ENCODE measurements at regions of chr15 and their contacts with region 1.

Region 1: GRCh38 chr15:68672781-68673205 is 94.0 kb downstream of the CORO2B start:
- DNase-seq: no peak
- ATAC-seq: no peak
- H3K4me3 ChIP-seq: no peak overlapping the region
- H3K4me1 ChIP-seq: no peaks in the 10 kb centered on the region
- CTCF ChIP-seq: no peak

Region 2: DNA sequence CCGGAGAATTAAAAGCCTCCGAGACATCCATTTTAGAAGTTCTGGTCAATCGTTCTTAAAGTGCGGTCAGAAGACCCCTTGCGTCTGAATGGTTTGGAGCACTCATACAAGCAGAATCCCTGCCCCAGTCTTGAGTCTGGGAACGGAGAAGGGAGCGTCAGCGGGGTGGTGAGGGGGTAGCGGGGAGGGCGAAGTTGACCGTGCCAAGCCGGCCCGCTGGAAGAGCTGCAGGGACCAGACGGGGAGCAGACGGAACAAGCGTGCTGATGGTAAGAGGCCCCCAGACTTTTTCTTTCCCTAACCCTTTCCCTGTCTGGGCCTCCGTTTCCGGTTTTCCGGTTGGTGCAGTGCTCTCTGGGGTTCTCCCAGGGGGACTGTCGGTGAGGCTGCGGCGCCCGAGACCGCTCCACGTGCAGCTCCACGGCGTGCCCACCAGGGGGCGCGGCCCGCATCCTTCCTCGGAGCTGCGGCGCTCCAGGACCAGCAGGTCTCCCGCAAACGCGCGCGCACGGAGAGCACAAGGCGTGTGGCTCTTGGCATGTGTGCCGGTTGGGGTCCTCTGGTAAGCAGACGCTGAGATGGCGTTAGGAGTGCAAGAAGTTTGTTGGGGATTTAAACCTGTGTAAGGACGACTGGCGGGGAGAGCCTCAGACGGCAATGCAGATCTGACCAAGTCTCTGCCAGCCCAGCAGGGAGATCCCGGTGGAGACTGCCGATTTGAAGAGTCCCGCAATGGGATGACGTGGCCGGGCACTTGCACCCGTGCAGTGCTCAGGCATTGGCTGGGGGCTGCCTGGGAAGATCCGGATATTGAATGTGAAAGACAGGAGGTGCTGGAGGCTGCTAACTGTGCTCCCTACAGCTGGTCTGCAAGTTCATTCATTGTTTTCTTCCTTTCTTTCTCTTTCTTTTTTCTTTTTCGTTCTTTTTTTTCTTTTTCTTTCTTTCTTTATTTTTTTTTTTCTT is 113.2 kb before region 1 on chr15:
- intact Hi-C with region 1: loop called (anchors 5 to 10 kb)
- DNase-seq: peak; percentile 75 to 80 (median 77)
- ATAC-seq: peak; percentile 95
- H3K4me3 ChIP-seq: no peak overlapping the region
- H3K4me1 ChIP-seq: no peaks in the 10 kb centered on the region
- CTCF ChIP-seq: peak; percentile 90

Region 3: DNA sequence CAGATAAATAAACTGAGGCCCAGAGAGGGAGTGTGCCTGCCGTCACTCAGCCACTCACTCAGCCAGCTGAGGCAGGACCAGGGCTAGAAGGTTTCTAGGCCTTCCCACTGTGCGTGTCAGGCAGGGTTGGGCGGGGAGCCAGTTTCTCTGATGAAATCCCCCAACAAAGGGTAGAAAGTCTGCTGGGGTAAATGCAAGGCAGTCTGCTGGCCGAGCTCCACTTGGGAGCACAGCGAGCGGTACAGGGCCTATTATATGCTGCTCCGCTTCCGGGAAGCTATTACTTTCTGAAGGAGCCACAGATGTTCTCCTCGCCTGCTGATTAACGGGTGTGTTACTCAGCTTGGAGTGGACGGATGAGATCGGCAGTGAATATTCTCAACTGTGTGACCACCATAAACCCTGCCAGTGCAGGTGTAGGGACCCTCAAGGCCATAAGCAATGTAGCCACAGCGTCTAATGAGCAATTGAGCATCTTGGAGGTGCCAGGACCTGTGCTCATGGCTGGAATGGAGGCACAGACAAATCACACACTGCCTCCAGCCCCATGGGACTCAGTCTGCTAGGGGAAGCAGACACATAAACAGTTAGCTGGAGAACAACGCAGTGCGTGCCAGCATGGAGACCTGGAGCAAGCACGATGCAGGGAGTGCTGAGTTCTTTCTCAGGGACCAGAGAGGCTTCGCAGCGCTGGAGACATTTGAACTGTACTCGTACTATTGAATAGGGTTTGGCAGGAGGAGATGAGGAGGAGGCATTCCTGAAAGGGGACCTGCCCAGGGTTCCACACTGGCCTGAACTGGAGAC is 51.9 kb before region 1 on chr15:
- intact Hi-C with region 1: no loop called
- DNase-seq: peak; percentile 58 to 79 (median 66)
- ATAC-seq: peak; percentile 67
- H3K4me3 ChIP-seq: no peak overlapping the region
- H3K4me1 ChIP-seq: no peaks in the 10 kb centered on the region
- CTCF ChIP-seq: no peak

Region 4: GRCh38 chr15:68795298-68795848 is 122.6 kb after region 1 on chr15:
- intact Hi-C with region 1: no loop called
- DNase-seq: peak; percentile 91 to 93 (median 91)
- ATAC-seq: peak; percentile 91
- H3K4me3 ChIP-seq: no peak overlapping the region
- H3K4me1 ChIP-seq: peaks cover 65% of the 10 kb centered on the region
- CTCF ChIP-seq: no peak

Region 5: DNA sequence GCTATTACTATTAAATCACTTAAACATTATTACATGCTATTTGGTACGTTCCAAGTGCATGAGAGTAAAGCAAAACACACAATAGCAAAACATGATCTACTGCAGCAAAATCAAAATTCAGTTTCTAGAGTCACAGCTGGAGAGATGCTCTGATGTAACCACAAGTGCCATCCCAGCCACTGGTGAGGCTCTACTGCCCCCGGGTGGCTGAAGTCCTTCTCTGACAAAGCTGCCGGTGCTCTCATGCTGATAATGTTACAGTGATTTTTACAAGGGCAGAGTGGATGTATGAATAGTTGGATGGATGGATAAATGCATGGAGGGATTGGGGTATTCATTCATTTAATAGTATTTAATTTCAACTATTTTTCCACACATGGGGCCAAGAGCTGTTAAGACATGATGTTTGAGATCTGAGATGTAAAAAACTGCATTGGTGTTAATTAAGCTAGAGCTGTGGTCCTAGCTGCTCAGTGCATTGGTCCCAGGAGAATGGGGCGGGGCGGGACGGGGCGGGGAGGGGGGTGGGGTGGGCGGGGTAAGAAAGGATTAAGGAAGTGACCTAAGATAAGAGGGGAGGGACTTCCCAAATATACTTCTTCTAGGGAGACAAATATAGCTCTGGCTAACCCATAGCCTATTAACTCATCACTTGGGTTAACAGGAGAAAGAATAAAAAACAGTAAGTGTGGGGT is 252.2 kb after region 1 on chr15:
- intact Hi-C with region 1: no loop called
- DNase-seq: peak; percentile 43 to 84 (median 76)
- ATAC-seq: peak; percentile 68
- H3K4me3 ChIP-seq: no peak overlapping the region
- H3K4me1 ChIP-seq: no peaks in the 10 kb centered on the region
- CTCF ChIP-seq: peak; percentile 55

Measured in mucosa of descending colon (tissue), 3 donors.